Left cardiac atrium (tissue), 4 donors: ENCODE measurements at regions of chr2 and their contacts with region 1.

Region 1: DNA sequence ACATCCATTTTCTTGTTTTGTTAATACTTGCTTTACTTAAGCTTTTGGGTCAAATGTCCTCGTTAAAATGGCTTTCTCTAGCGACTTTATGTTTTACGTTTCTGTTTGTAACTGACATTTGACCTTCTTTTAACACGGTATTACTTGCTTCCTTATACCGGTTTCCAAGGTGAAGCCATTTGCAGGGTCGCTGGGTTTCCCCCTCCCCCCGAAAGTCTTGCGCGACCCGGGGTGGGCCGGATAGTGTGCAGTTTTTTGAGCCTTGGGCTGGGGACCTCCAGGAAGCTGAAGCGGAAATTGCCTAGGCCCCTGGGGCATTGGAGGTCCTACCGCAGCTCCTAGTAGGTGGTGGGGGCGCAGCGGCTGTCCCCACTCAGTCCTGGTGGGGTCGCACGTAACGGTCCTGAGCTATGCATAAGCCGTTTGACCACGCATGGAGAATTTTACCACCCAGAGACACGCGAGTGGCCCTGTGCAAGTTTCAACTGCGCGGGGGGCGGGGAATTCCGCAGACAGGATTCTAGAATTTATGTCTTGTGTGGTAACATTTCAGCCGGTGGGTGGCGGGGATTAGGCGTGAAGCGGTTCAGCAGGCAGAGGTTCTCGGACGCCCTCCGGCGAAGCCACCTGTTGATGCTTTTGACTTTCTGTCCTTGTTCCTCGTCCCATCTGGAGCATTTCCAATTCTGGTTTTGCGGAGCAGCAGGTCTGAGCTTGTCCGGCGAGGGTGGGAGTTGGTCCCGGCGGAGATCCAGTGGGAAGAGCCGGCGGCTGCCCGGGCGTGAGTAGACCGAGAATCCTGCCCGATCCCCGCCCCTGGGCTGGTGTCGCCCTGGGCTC is 2.4 kb downstream of the CFLAR start:
- DNase-seq: peak; percentile 92
- ATAC-seq: peak; percentile 46 to 53

Region 2: DNA sequence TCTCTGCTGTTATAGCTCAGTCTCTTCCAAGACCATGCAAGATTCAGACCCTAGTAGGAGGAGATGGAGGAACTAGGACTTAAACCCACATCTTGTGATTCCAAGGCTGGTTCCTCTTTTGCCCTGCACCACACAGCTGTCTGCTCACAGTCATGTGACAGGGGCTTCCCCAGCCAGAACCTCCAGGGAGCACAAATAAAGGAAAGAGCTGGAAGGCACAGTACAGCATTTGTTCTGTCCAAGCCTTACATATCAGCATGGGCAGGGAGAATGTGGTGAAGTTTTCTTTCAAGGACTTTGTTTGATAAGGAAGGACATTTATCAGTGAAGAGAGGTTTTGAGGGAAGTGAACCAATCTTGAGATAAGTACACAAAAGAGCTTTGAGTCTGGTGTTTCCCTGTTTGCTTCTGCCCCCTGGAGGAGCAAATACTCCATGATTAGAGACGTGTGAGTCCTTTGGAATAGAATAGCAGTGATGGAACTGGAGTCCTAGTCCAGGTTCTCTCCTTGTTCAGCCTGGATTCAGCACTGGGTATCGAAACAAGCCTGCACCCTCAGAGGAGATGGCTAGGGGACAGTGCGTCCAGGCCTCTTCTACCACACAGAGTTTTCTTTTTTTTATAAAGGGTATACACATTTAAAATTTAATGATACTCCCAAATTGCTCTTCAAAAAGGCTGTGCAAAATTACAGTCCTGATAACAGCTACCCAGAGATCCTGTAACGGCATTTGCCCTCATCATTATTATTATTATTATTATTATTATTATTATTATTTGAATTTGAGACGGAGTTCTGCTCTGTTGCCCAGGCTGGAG is 40.0 kb after region 1 on chr2:
- intact Hi-C with region 1: loop called (anchors 5 to 10 kb)
- DNase-seq: peak; percentile 75
- ATAC-seq: peak; percentile 87 to 91

Region 3: DNA sequence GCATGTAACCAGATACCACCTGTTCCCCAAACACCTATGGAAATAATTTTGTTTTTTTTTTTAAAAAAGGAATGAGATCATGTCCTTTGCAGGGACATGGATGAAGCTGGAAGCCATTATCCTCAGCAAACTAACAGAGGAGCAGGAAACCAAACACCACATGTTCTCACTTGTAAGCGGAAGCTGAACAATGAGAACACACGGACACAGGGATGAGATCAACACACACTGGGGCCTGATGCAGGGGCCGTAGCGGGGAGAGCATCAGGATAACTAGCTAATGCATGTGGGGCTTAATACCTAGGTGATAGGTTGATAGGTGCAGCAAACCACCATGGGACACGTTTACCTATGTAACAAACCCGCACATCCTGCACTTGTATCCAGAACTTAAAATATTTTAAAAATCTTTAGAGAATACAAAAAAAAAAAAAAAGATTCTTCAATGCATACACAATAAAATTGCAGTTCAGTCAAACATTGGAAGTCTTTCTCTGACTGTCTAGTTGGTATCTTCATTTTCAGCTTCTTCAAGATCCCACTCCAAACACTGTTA is 53.0 kb after region 1 on chr2:
- intact Hi-C with region 1: loop called in 1 of 2 experiments (anchors 10 kb)
- DNase-seq: no peak
- ATAC-seq: peak in 1 of 2 donors; percentile 13

Region 4: GRCh38 chr2:201208563-201209252 is 90.4 kb after region 1 on chr2:
- intact Hi-C with region 1: no loop called
- DNase-seq: no peak
- ATAC-seq: peak in 1 of 2 donors; percentile 80